ENCODE measurements at regions of chr5 and their contacts with region 1.

Region 1: GRCh38 chr5:149667084-149667828 is 62.9 kb upstream of the PPARGC1B start:
- DNase-seq: peak; percentile 56
- ATAC-seq: peak; percentile 44
- H3K4me3 Mint-ChIP-seq: no peak overlapping the region
- H3K27ac Mint-ChIP-seq: no peak overlapping the region
- H3K4me1 Mint-ChIP-seq: no peaks in the 10 kb centered on the region
- H3K27me3 Mint-ChIP-seq: peaks cover 4% of the 10 kb centered on the region

Region 2: DNA sequence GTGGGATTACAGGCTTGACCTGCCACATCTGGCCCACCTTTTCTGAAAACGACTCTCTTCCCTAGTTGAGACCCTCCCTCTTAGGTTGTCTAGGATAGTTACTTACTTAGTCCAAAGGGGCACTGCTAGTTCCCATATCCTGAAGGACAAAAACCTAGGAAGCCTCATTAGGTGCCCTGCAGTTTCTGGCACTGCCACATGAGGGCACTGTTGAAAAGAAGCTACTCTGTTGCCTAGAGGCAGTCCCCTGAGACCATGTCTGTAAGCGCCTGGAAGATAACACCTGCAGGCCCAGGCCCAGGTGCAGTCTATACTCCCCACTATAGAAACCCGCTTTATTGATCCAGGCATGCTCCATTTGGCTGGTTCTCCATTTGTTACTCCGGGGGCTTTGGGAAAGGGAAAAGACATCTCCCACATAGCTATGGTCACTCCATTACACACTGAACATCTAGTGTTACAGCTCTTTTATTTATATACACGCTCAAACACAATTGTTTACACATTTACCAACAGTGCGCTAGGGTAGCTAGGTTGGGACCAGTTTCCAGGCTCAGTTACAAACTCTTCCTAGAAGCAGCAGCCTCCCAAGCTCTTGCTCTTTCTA is 10.6 kb before region 1 on chr5:
- CTCF ChIA-PET with region 1: interaction called, 13 read pairs
- POLR2A ChIA-PET with region 1: no interaction called
- DNase-seq: peak; percentile 44
- ATAC-seq: no peak
- H3K4me3 Mint-ChIP-seq: no peak overlapping the region
- H3K27ac Mint-ChIP-seq: no peak overlapping the region
- H3K4me1 Mint-ChIP-seq: no peaks in the 10 kb centered on the region
- H3K27me3 Mint-ChIP-seq: peaks cover 4% of the 10 kb centered on the region

Region 3: DNA sequence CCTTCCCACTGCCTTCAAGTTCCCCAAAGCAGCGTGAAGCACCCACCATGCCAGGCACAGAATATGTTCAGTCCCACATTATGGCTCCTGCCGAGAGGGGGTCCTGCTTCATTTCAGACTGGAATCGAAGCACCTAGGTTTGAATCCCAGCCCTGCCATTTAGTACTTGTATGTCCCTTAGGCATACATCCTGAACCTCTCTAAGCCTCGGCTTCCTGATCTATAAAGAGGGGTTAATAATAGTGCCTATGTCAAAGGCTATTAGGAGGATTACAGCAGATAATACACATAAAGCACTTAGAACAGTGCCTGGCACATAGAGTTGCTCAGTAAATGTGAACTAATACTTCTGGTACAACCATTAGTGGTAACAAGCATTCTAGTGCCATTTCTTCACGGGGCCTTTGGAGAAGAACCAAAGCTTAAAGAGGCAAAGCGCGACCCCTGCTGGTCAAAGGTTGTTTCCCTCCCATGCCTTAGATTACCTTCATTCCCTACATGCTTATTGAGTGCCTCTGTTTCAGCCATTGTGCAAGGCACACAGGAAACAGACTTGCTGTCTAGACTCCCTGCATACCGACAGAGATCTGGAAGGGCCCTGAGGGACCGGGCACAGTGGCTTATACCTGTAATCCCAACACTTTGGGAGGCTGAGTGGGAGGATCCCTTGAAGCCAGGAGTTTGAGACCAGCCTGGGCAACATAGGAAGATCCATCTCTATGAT is 161.1 kb after region 1 on chr5:
- CTCF ChIA-PET with region 1: interaction called, 74 read pairs
- POLR2A ChIA-PET with region 1: no interaction called
- DNase-seq: peak; percentile 89
- ATAC-seq: peak; percentile 71
- H3K4me3 Mint-ChIP-seq: no peak overlapping the region
- H3K27ac Mint-ChIP-seq: no peak overlapping the region
- H3K4me1 Mint-ChIP-seq: peaks cover 5% of the 10 kb centered on the region
- H3K27me3 Mint-ChIP-seq: no peaks in the 10 kb centered on the region

Region 4: GRCh38 chr5:149852641-149853330 is 185.5 kb after region 1 on chr5:
- CTCF ChIA-PET with region 1: interaction called, 10 read pairs
- POLR2A ChIA-PET with region 1: no interaction called
- DNase-seq: peak; percentile 59
- ATAC-seq: peak; percentile 73
- H3K4me3 Mint-ChIP-seq: no peak overlapping the region
- H3K27ac Mint-ChIP-seq: no peak overlapping the region
- H3K4me1 Mint-ChIP-seq: no peaks in the 10 kb centered on the region
- H3K27me3 Mint-ChIP-seq: no peaks in the 10 kb centered on the region

Region 5: GRCh38 chr5:149895416-149896345 is 228.4 kb after region 1 on chr5:
- CTCF ChIA-PET with region 1: no interaction called
- POLR2A ChIA-PET with region 1: no interaction called
- DNase-seq: no peak
- ATAC-seq: no peak
- H3K4me3 Mint-ChIP-seq: no peak overlapping the region
- H3K27ac Mint-ChIP-seq: no peak overlapping the region
- H3K4me1 Mint-ChIP-seq: no peaks in the 10 kb centered on the region
- H3K27me3 Mint-ChIP-seq: peaks cover 28% of the 10 kb centered on the region

Measured in activated CD8-positive, alpha-beta T cell treated with anti-CD3 and anti-CD28 coated beads, Interleukin-2, amount 10 ng/mL, durations not matched to agents 7 days and 5 days (primary cell).